B cell (primary cell): ENCODE measurements at regions of chr6 and their contacts with region 1.

Region 1: DNA sequence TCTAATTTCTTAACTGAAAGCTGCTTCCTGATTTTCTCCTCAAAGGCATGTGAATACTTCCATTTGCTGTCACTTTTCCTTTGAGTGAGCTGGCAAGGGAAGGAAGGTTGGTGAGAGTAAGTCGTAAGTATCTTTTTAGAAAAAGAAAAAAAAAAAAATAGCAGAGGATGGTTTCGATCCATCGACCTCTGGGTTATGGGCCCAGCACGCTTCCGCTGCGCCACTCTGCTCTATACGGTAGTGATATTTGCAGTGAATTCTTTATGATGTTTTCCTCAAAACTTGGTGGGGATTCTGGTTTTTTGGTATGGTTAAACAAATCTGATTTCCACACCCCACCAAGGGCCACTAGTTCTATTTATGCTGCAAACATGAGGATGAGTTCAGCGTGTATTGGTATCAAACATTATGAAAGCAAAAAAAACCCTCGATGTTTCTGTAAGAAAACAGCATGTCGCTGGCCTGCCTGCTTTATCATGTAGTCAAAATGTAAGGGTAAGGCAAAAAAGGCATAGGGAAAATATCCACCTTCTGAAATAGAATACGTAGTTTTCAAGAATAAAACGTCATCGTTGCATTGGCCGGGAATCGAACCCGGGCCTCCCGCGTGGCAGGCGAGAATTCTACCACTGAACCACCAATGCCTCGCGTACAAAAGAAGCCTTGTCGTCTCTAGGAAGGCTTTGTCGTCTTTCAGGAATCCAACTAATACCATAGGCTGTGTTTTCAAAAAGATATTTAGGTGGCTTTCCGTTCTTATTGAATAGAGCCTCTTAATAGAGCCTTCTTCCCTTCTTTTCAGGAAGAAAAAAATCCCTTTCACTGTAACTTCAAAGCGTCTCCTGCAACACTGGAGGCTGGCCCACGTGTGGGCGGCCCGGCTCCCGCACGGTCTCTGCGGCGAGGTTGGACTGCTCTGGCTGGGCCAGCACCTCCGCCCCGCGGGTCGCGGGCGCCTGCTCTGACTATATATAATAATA is 9.6 kb downstream of the OR2B2 start:
- DNase-seq: peak; percentile 94
- ATAC-seq: peak; percentile 84
- H3K4me3 ChIP-seq: peak overlapping the region; percentile 56 to 91 (median 70)
- H3K4me3 Mint-ChIP-seq: peak overlapping the region; percentile 94
- H3K27ac ChIP-seq: peak overlapping the region; percentile 78 to 95
- H3K27ac Mint-ChIP-seq: peak overlapping the region; percentile 99
- H3K4me1 ChIP-seq: peaks cover 0 to 8% of the 10 kb centered on the region in 2 donors
- H3K4me1 Mint-ChIP-seq: peaks cover 7% of the 10 kb centered on the region
- H3K27me3 ChIP-seq: no peaks in the 10 kb centered on the region
- H3K27me3 Mint-ChIP-seq: peaks cover 7% of the 10 kb centered on the region
- CTCF ChIP-seq: no peak

Region 2: DNA sequence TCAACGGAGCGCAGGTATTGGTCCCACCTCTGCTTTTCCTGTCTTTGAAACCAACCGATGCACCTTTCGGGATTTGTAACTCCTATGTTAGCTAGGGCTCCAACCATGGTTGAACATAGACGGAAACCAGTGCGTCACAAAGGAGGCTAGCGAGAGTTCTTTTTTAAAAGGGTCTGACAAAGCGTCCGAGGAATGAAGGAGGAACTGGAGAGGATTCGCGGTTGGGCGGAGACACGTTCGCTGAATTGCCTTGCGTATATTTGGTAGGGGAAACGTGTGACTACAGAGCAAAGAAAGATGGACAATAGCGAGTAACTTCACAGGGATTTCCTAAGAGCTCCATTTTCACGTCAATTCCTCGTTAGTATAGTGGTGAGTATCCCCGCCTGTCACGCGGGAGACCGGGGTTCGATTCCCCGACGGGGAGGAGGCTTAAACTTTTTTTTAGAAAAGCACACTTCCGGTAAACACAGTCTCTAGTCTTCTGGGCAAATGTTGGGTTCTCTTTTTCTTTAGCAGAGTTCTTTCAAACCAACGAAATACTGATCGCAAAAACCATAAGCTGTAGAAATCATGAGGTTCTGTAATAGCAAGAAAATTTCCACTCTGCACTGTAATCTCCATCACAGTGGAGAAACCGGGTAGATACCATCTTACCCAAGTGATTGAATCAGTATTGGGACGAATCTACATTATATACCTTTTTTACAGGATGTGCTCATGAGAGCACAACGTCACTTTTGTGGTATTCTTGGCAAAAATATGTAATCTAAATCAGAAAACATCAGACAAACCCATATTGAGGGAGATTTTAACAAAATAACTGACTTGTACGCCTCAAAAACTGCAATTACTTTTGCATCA is 423.1 kb before region 1 on chr6:
- CTCF ChIA-PET with region 1: no interaction called
- POLR2A ChIA-PET with region 1: no interaction called
- intact Hi-C with region 1: loop called (anchors 2 kb)
- DNase-seq: peak; percentile 96
- ATAC-seq: peak; percentile 77
- H3K4me3 ChIP-seq: peak overlapping the region; percentile 88 to 97 (median 95)
- H3K4me3 Mint-ChIP-seq: no peak overlapping the region
- H3K27ac ChIP-seq: peak overlapping the region; percentile 98
- H3K27ac Mint-ChIP-seq: no peak overlapping the region
- H3K4me1 ChIP-seq: peaks cover 15 to 17% of the 10 kb centered on the region in 2 donors
- H3K4me1 Mint-ChIP-seq: peaks cover 6% of the 10 kb centered on the region
- H3K27me3 ChIP-seq: no peaks in the 10 kb centered on the region
- H3K27me3 Mint-ChIP-seq: no peaks in the 10 kb centered on the region
- CTCF ChIP-seq: no peak

Region 3: DNA sequence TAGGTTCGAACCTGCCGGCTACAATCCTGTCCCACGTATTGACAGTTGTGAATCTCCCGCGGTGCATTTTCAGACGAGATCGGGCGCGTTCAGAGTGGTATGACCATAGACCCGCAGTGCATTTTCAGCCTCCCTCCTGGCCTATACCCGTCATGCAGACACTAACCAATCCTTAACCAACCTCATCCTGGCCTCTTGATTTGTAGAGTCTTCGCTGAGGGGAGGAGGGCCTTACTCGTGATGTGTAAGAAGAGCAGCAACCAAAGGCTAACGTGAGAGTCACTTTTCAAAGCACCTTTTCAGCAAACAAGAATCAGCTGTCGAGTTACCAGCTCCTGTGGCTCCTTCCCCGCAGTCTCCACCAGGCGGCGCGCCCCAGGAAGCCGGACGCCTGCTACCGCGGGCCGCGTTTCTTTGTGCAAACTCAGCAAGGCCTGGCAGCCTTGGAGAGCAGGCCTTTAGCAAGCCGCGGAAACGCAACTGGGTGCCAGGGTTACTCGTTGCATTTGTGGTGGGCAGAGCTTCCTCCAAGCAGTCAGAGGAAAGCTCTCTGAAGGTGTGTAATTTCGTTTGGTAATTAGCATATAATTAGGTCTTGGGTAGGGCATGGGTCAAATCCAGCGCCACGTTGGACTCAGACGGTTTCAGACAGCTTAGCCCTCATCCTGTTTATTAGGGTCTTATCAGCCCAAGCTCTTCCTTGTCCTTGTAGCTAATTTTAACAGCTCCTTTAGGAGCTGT is 130.2 kb before region 1 on chr6:
- CTCF ChIA-PET with region 1: interaction called, 150 read pairs
- POLR2A ChIA-PET with region 1: no interaction called
- intact Hi-C with region 1: loop called (anchors 2 kb)
- DNase-seq: peak; percentile 87
- ATAC-seq: peak; percentile 88
- H3K4me3 ChIP-seq: no peak overlapping the region
- H3K4me3 Mint-ChIP-seq: peak overlapping the region; percentile 65
- H3K27ac ChIP-seq: peak overlapping the region in 1 of 2 donors; percentile 2
- H3K27ac Mint-ChIP-seq: peak overlapping the region; percentile 84
- H3K4me1 ChIP-seq: peaks cover 26 to 29% of the 10 kb centered on the region in 2 donors
- H3K4me1 Mint-ChIP-seq: peaks cover 36% of the 10 kb centered on the region
- H3K27me3 ChIP-seq: peaks cover 0 to 4% (median 2%) of the 10 kb centered on the region in 4 experiments
- H3K27me3 Mint-ChIP-seq: peaks cover 10% of the 10 kb centered on the region
- CTCF ChIP-seq: peak; percentile 93

Region 4: GRCh38 chr6:28104392-28105244 is 202.0 kb after region 1 on chr6:
- CTCF ChIA-PET with region 1: no interaction called
- POLR2A ChIA-PET with region 1: no interaction called
- intact Hi-C with region 1: loop called (anchors 2 kb)
- DNase-seq: peak; percentile 92
- ATAC-seq: peak; percentile 97
- H3K4me3 ChIP-seq: peak overlapping the region; percentile 69 to 78 (median 74)
- H3K4me3 Mint-ChIP-seq: peak overlapping the region; percentile 95
- H3K27ac ChIP-seq: peak overlapping the region; percentile 87 to 93
- H3K27ac Mint-ChIP-seq: peak overlapping the region; percentile 96
- H3K4me1 ChIP-seq: peaks cover 5 to 7% of the 10 kb centered on the region in 2 donors
- H3K4me1 Mint-ChIP-seq: peaks cover 13% of the 10 kb centered on the region
- H3K27me3 ChIP-seq: no peaks in the 10 kb centered on the region
- H3K27me3 Mint-ChIP-seq: peaks cover 4% of the 10 kb centered on the region
- CTCF ChIP-seq: peak; percentile 79

Region 5: DNA sequence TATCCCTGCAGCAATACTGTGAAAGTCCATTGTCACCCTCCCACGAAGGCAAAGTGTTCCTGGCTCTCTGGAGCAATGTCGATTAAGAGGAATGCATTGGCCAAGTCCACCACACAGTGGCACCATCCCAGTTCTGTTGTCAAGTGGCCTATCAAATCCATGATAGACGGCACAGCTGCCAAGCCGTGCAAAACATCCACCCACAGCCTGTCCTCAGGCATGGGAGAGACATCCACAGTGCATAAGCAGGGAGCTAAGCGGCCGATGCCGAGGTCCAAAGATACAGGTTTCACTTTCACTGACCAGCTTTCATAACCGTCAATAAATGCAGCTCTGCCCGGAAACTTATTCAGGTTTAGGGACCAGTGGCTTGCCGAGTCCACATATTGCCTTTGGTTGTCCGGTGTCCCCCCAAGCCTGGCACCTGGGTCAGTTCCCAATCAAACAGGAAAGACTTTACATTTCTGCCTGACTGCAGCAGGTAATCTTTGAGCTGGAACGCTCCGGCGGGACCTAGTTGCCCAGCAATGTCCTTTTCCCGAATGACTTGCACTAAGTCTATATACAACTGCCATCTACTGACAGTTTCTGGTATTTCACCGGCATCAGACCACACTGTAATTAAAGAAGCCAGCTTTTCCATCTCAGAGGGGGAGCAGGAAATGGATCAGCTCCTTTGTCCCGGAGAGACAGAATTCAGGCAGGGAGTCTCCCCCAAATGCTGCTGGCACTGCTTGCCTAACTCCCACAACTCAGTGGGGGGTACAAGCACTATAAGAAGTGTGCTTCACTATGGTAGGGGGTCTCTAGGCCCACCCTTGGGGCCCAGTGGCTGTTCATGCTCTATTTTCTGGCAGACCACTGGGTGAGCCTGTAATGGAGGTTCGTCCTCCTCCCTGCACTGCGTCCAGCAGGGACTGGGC is 453.4 kb after region 1 on chr6:
- CTCF ChIA-PET with region 1: interaction called, 6 read pairs
- POLR2A ChIA-PET with region 1: interaction called, 3 read pairs
- intact Hi-C with region 1: loop called (anchors 2 kb)
- DNase-seq: peak; percentile 81
- ATAC-seq: peak; percentile 87
- H3K4me3 ChIP-seq: peak overlapping the region; percentile 48 to 70 (median 61)
- H3K4me3 Mint-ChIP-seq: peak overlapping the region; percentile 99
- H3K27ac ChIP-seq: no peak overlapping the region
- H3K27ac Mint-ChIP-seq: peak overlapping the region; percentile 87
- H3K4me1 ChIP-seq: peaks cover 2 to 17% of the 10 kb centered on the region in 2 donors
- H3K4me1 Mint-ChIP-seq: peaks cover 18% of the 10 kb centered on the region
- H3K27me3 ChIP-seq: no peaks in the 10 kb centered on the region
- H3K27me3 Mint-ChIP-seq: no peaks in the 10 kb centered on the region
- CTCF ChIP-seq: peak; percentile 84

Region 6: DNA sequence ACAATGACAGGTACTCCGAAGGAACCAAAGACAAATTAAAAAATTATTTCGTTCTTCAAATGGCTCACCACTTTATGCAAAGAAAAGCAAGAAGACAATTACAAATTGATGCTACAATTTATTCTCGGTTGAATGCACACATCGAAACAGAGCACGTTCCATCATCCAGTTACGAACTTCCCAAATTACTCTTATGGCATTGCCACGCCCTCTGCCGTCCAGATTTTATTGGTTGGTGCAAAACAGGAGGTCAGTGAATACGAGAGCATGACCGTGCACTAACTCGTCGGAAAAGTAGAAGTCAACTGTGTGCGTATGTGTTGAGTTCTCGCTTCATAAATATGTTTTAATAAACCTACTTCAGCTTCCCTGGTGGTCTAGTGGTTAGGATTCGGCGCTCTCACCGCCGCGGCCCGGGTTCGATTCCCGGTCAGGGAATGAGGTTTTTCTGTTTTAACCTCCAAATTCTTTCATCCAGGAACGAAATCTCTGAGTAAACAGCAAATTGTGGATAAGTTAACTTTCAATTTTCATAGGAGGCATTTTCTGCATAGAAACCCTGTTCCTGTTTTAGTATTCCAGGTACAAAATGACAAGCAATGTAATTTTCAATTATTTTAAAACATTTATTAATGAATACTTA is 1079.3 kb after region 1 on chr6:
- CTCF ChIA-PET with region 1: no interaction called
- POLR2A ChIA-PET with region 1: no interaction called
- intact Hi-C with region 1: loop called (anchors 5 kb)
- DNase-seq: peak; percentile 91
- ATAC-seq: peak; percentile 70
- H3K4me3 ChIP-seq: peak overlapping the region; percentile 67 to 97 (median 75)
- H3K4me3 Mint-ChIP-seq: peak overlapping the region; percentile 93
- H3K27ac ChIP-seq: no peak overlapping the region
- H3K27ac Mint-ChIP-seq: peak overlapping the region; percentile 96
- H3K4me1 ChIP-seq: peaks cover 36 to 37% of the 10 kb centered on the region in 2 donors
- H3K4me1 Mint-ChIP-seq: peaks cover 55% of the 10 kb centered on the region
- H3K27me3 ChIP-seq: peaks cover 0 to 28% (median 14%) of the 10 kb centered on the region in 4 experiments
- H3K27me3 Mint-ChIP-seq: peaks cover 28% of the 10 kb centered on the region
- CTCF ChIP-seq: no peak